H1 (cell line): ENCODE measurements at regions of chr18 and their contacts with region 1.

Region 1: GRCh38 chr18:3869848-3870247 is 419.9 kb downstream of the TGIF1 start:
- DNase-seq: no peak
- H3K4me3 ChIP-seq: no peak overlapping the region
- H3K27ac ChIP-seq: no peak overlapping the region
- H3K4me1 ChIP-seq: peaks cover 0 to 4% (median 1%) of the 10 kb centered on the region in 4 experiments; a peak in 3 of 7 replicates
- H3K27me3 ChIP-seq: no peaks in the 10 kb centered on the region
- CTCF ChIP-seq: peak in 2 of 3 experiments; percentile 54 to 58; a peak in 2 of 4 replicates
- EP300 ChIP-seq: no peak
- POLR2A ChIP-seq: no peak
- RAD21 ChIP-seq: peak; percentile 85 to 88

Region 2: GRCh38 chr18:3692113-3692621 is 177.7 kb before region 1 on chr18:
- CTCF ChIA-PET with region 1: interaction called, 16 read pairs
- POLR2A ChIA-PET with region 1: no interaction called
- DNase-seq: no peak
- H3K4me3 ChIP-seq: no peak overlapping the region
- H3K27ac ChIP-seq: no peak overlapping the region
- H3K4me1 ChIP-seq: peaks cover 0 to 6% (median 0%) of the 10 kb centered on the region in 4 experiments; a peak in 2 of 7 replicates
- H3K27me3 ChIP-seq: no peaks in the 10 kb centered on the region
- CTCF ChIP-seq: no peak
- EP300 ChIP-seq: no peak
- POLR2A ChIP-seq: no peak
- RAD21 ChIP-seq: no peak

Region 3: DNA sequence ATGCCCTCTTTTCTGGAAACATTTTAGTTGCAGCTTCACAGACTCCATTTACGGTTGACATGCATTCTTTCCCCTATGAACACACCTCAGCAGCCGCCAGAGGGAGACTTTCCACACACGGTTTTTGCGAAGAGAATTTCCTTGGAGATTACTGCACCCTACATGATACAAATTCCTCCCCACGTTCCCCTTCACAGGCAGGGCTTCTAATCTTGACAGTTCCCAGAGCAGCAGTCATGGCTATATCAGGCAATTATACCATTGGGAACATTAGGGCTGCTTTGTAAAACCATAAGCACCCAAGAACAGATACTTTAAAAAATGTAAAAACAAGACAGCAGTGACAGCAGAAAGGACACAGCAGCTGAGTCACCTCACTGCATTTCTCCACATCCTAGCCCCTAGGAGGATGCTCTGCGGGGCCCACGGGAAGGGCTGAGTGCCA is 166.1 kb before region 1 on chr18:
- CTCF ChIA-PET with region 1: interaction called, 35 read pairs
- POLR2A ChIA-PET with region 1: no interaction called
- DNase-seq: peak in 1 of 2 experiments; percentile 65
- H3K4me3 ChIP-seq: no peak overlapping the region
- H3K27ac ChIP-seq: no peak overlapping the region
- H3K4me1 ChIP-seq: 0 out of 7 replicates have a peak, but pooled peaks cover 0 to 2% (median 0%) of the 10 kb centered on the region in 4 experiments
- H3K27me3 ChIP-seq: no peaks in the 10 kb centered on the region
- CTCF ChIP-seq: peak; percentile 51 to 76 (median 73)
- EP300 ChIP-seq: no peak
- POLR2A ChIP-seq: no peak
- RAD21 ChIP-seq: peak; percentile 75 to 79

Region 4: DNA sequence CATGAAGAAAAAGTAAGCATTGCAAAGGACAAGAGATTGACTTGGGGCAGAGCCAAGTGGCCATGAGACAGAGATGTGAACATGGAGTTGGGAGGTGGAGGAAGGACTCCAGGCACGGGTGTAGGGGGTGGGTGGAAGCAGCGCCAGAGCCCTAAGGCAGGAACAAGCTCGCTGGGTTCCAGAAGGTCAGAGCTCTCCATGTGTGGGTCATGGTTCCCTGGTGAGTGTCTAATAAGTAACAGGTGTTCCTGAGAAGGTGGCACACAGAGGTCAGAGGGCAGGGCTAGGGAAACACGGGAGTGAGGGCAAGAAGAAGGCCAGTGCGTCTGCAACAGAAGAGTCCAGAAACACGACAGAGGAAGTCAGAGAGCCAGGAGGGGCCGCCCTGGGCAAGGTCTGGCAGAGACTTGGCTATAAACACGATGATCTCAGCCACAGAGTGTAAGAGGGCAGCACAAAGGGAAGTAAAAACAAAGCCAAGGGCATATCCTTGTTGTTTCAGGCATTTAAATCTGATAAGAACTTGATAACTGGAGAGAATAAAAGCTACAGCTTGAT is 159.1 kb before region 1 on chr18:
- CTCF ChIA-PET with region 1: interaction called, 23 read pairs
- POLR2A ChIA-PET with region 1: no interaction called
- DNase-seq: no peak
- H3K4me3 ChIP-seq: no peak overlapping the region
- H3K27ac ChIP-seq: no peak overlapping the region
- H3K4me1 ChIP-seq: no peaks in the 10 kb centered on the region
- H3K27me3 ChIP-seq: no peaks in the 10 kb centered on the region
- CTCF ChIP-seq: no peak
- EP300 ChIP-seq: no peak
- POLR2A ChIP-seq: no peak
- RAD21 ChIP-seq: no peak

Region 5: GRCh38 chr18:3782901-3783300 is 86.9 kb before region 1 on chr18:
- CTCF ChIA-PET with region 1: interaction called, 11 read pairs
- POLR2A ChIA-PET with region 1: no interaction called
- DNase-seq: no peak
- H3K4me3 ChIP-seq: no peak overlapping the region
- H3K27ac ChIP-seq: no peak overlapping the region
- H3K4me1 ChIP-seq: no peaks in the 10 kb centered on the region
- H3K27me3 ChIP-seq: no peaks in the 10 kb centered on the region
- CTCF ChIP-seq: no peak
- EP300 ChIP-seq: no peak
- POLR2A ChIP-seq: no peak
- RAD21 ChIP-seq: no peak

Region 6: DNA sequence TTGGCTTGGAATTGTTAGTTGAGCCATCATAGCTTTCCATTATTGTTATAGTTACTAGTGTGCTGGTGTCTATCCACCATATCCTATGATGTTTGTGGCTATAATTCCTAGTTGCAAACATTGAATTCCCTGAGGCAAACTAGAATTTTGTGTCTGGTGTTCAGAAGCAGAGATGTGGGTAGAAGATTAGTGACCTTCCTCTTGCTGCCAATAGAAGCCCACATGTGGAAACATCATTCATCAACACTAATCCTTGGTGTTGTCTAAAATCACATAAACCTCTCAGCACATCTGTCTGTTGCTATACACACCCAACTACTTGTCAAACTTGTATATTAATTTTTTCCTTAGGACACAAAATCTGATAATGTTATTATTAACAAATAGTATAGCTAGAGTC is 45.7 kb before region 1 on chr18:
- CTCF ChIA-PET with region 1: interaction called, 13 read pairs
- POLR2A ChIA-PET with region 1: no interaction called
- DNase-seq: no peak
- H3K4me3 ChIP-seq: no peak overlapping the region
- H3K27ac ChIP-seq: no peak overlapping the region
- H3K4me1 ChIP-seq: peaks cover 0 to 9% (median 4%) of the 10 kb centered on the region in 4 experiments; a peak in 5 of 7 replicates
- H3K27me3 ChIP-seq: peaks cover 0 to 1% (median 0%) of the 10 kb centered on the region in 4 experiments; a peak in 1 of 7 replicates
- CTCF ChIP-seq: no peak
- EP300 ChIP-seq: no peak
- POLR2A ChIP-seq: no peak
- RAD21 ChIP-seq: no peak

Region 7: DNA sequence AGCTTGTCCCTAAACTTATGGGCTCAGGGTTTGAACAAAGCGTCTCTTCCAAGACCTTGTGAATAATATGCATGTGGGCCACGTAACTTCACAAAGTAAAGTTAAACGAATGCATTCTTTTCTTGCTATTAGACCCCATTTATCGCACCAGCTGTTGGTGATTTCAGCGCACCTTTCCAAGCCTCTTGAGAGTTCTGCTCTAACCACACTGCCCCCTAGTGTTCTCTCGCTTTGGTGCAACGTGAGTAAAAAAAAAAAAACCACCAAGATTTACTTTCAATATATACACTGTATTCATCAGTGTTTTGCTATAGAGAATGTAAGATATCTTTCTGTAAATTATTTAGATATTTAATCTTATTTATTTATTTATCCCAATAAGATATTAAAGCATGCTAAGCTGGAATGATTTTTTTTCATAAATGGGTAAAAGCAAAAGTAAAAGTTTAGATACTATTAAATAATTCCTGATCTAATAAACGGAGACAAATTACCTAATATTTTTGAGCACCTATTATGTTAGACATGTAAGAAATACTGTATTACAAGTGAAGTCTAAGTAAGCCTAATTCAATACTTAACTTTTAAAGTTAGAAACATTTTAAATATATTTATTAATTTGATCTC is 125.7 kb after region 1 on chr18:
- CTCF ChIA-PET with region 1: interaction called, 13 read pairs
- POLR2A ChIA-PET with region 1: no interaction called
- DNase-seq: peak in 1 of 2 experiments; percentile 69
- H3K4me3 ChIP-seq: no peak overlapping the region
- H3K27ac ChIP-seq: no peak overlapping the region
- H3K4me1 ChIP-seq: peaks cover 0 to 7% (median 3%) of the 10 kb centered on the region in 4 experiments; a peak in 4 of 7 replicates
- H3K27me3 ChIP-seq: no peaks in the 10 kb centered on the region
- CTCF ChIP-seq: peak; percentile 21 to 66 (median 66)
- EP300 ChIP-seq: no peak
- POLR2A ChIP-seq: no peak
- RAD21 ChIP-seq: peak; percentile 72 to 76

Region 8: DNA sequence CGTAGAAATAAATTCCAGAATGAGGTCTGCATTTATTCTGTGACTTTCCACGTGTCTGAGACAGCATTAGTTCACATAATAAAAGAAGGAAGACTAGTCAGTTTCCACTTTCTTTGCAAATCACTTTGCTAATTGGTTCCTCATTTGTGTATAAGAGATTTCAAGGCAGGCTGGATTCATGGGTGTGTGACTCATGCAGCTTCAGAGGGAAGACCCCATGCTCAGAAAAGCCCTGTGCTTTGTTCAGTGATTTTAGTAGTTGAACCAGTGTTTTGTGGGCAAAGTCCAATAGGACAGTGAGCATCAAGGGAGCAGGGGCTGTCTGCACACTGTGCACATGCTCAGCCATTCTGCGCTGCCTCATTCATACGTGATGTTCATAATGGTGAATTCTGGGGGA is 287.5 kb after region 1 on chr18:
- CTCF ChIA-PET with region 1: no interaction called
- POLR2A ChIA-PET with region 1: no interaction called
- DNase-seq: no peak
- H3K4me3 ChIP-seq: no peak overlapping the region
- H3K27ac ChIP-seq: no peak overlapping the region
- H3K4me1 ChIP-seq: peaks cover 3 to 5% (median 4%) of the 10 kb centered on the region in 4 experiments; a peak in 4 of 7 replicates
- H3K27me3 ChIP-seq: no peaks in the 10 kb centered on the region
- CTCF ChIP-seq: no peak
- EP300 ChIP-seq: no peak
- POLR2A ChIP-seq: no peak
- RAD21 ChIP-seq: no peak